Activated B cell treated with CpG ODN at 0.5 μM for 24 hours (primary cell): ENCODE measurements at regions of chr10 and their contacts with region 1.

Region 1: DNA sequence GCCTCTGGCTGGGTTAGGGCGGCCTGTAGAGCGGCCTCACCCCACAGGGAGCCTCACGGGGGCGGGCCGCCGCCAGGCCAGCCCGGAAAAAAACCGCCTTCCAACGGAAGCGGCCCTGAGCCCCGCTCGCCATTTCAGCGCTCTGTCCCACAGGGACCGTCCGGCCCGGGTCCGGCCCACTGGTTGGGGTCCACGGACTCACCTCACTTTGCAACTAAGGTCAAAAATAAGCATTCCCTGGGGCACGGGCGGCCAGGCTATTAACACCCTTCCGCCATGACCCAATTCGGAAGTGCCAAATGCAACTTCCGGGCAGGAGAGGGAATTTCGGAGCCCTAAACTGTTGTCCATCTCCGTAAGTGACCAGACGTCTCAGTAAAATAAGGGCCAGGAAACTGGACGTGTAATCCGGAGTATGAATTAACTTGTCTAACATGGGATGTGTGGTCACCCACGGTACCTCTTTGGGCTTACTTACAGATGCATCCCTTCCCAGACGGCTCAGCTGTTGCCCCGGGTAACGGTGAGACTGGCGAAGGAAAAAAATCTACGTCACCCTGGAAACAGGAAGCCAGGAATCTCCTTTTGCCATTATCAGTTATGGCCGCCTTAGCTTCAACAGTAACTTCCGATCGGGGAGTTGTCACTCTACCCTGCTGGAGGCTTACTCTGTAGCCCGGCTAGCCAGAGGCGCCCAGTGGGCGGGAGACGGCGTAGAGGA is at the start of gene BBIP1:
- DNase-seq: peak; percentile 89
- ATAC-seq: peak; percentile 84
- H3K4me3 Mint-ChIP-seq: peak within 1 kb of the TSS; percentile 99
- H3K27ac Mint-ChIP-seq: peak within 1 kb of the TSS; percentile 99
- H3K4me1 Mint-ChIP-seq: peaks cover 51% of the 10 kb centered on the region
- H3K27me3 Mint-ChIP-seq: no peaks in the 10 kb centered on the region
- CTCF ChIP-seq: no peak
- total RNA-seq, gene BBIP1: 28.4 and 29.0 TPM in 2 replicates

Region 2: GRCh38 chr10:109956454-109957091 is 962.2 kb before region 1 on chr10:
- CTCF ChIA-PET with region 1: no interaction called
- POLR2A ChIA-PET with region 1: interaction called, 11 read pairs
- intact Hi-C with region 1: no loop called
- DNase-seq: no peak
- ATAC-seq: peak; percentile 79
- H3K4me3 Mint-ChIP-seq: peak overlapping the region; percentile 22
- H3K27ac Mint-ChIP-seq: peak overlapping the region; percentile 13
- H3K4me1 Mint-ChIP-seq: peaks cover 15% of the 10 kb centered on the region
- H3K27me3 Mint-ChIP-seq: no peaks in the 10 kb centered on the region
- CTCF ChIP-seq: peak; percentile 50

Region 3: GRCh38 chr10:110225756-110226542 is 692.9 kb before region 1 on chr10:
- CTCF ChIA-PET with region 1: no interaction called
- POLR2A ChIA-PET with region 1: no interaction called
- intact Hi-C with region 1: loop called (anchors 2 kb)
- DNase-seq: peak; percentile 83
- ATAC-seq: peak; percentile 51
- H3K4me3 Mint-ChIP-seq: peak overlapping the region; percentile 97
- H3K27ac Mint-ChIP-seq: peak overlapping the region; percentile 96
- H3K4me1 Mint-ChIP-seq: peaks cover 28% of the 10 kb centered on the region
- H3K27me3 Mint-ChIP-seq: no peaks in the 10 kb centered on the region
- CTCF ChIP-seq: no peak

Region 4: GRCh38 chr10:110497438-110498086 is 421.2 kb before region 1 on chr10 and contains the start of gene DUSP5:
- CTCF ChIA-PET with region 1: no interaction called
- POLR2A ChIA-PET with region 1: no interaction called
- intact Hi-C with region 1: loop called (anchors 2 kb)
- DNase-seq: peak; percentile 99
- ATAC-seq: peak; percentile 87
- H3K4me3 Mint-ChIP-seq: peak within 1 kb of the TSS; percentile 90
- H3K27ac Mint-ChIP-seq: peak within 1 kb of the TSS; percentile 77
- H3K4me1 Mint-ChIP-seq: peaks cover 66% of the 10 kb centered on the region
- H3K27me3 Mint-ChIP-seq: peaks cover 3% of the 10 kb centered on the region
- CTCF ChIP-seq: no peak
- total RNA-seq, gene DUSP5: 26.1 and 28.6 TPM in 2 replicates

Region 5: DNA sequence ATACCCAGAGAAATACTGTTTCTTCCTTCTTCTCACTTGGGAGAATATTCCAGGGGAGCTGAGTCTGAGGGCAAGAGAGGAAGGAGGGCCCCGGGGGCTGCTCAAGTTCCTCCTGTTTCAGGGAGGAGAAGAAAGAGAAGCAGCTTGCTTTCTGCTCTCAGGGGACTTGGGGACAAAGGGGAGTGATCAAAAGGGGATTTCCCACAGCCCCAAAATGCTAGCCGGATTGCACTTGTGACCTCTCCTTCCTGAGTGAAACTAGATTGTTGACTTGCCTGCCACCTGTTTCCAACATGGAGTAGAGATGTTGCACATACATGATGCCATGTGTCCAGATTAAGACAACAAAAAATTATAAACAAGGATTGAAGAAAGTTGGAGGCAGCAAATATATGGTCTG is 75.8 kb before region 1 on chr10:
- CTCF ChIA-PET with region 1: no interaction called
- POLR2A ChIA-PET with region 1: interaction called, 24 read pairs
- intact Hi-C with region 1: loop called (anchors 1 kb)
- DNase-seq: peak; percentile 37
- ATAC-seq: peak; percentile 69
- H3K4me3 Mint-ChIP-seq: peak overlapping the region; percentile 78
- H3K27ac Mint-ChIP-seq: peak overlapping the region; percentile 89
- H3K4me1 Mint-ChIP-seq: peaks cover 77% of the 10 kb centered on the region
- H3K27me3 Mint-ChIP-seq: no peaks in the 10 kb centered on the region
- CTCF ChIP-seq: no peak

Region 6: GRCh38 chr10:110932505-110933180 is 13.8 kb after region 1 on chr10:
- CTCF ChIA-PET with region 1: no interaction called
- POLR2A ChIA-PET with region 1: interaction called, 17 read pairs
- intact Hi-C with region 1: loop called (anchors 1 kb)
- DNase-seq: no peak
- ATAC-seq: no peak
- H3K4me3 Mint-ChIP-seq: no peak overlapping the region
- H3K27ac Mint-ChIP-seq: no peak overlapping the region
- H3K4me1 Mint-ChIP-seq: peaks cover 37% of the 10 kb centered on the region
- H3K27me3 Mint-ChIP-seq: no peaks in the 10 kb centered on the region
- CTCF ChIP-seq: no peak

Region 7: DNA sequence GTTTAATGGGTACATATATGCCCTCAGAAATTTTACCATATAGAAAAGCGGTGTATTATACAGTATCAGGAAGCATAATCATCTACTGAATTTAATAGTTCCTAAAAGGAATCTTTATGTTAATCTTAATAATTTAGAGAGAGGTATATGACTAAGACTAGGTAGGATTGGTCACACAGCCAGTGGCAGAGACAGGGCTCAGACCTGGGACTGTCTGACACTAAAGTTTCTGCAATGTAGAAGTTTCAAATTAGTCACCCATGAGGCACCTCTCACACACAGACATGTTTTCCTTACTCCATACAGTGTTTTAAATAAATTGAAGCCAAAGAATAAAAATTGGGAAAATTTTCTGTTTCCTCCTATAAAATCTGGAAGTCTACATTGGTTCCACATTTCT is 85.2 kb after region 1 on chr10:
- CTCF ChIA-PET with region 1: no interaction called
- POLR2A ChIA-PET with region 1: interaction called, 3 read pairs
- intact Hi-C with region 1: loop called (anchors 5 kb)
- DNase-seq: no peak
- ATAC-seq: no peak
- H3K4me3 Mint-ChIP-seq: no peak overlapping the region
- H3K27ac Mint-ChIP-seq: no peak overlapping the region
- H3K4me1 Mint-ChIP-seq: peaks cover 2% of the 10 kb centered on the region
- H3K27me3 Mint-ChIP-seq: no peaks in the 10 kb centered on the region
- CTCF ChIP-seq: no peak